ENCODE measurements at regions of chr5 and their contacts with region 1.

Region 1: GRCh38 chr5:149434162-149435014 is 55.3 kb upstream of the IL17B start:
- DNase-seq: peak in 1 of 2 donors; percentile 83
- ATAC-seq: no peak
- H3K4me3 ChIP-seq: no peak overlapping the region
- H3K27ac ChIP-seq: peak overlapping the region in 1 of 2 donors; percentile 2
- H3K4me1 ChIP-seq: no peaks in the 10 kb centered on the region
- H3K27me3 ChIP-seq: no peaks in the 10 kb centered on the region

Region 2: GRCh38 chr5:149367249-149367971 is 67.0 kb before region 1 on chr5:
- intact Hi-C with region 1: loop called in 1 of 2 experiments (anchors 5 kb)
- DNase-seq: peak; percentile 76 to 85
- ATAC-seq: peak; percentile 67
- H3K4me3 ChIP-seq: no peak overlapping the region
- H3K27ac ChIP-seq: peak overlapping the region in 1 of 2 donors; percentile 35
- H3K4me1 ChIP-seq: peaks cover 0 to 3% of the 10 kb centered on the region in 2 donors
- H3K27me3 ChIP-seq: no peaks in the 10 kb centered on the region

Region 3: GRCh38 chr5:149381987-149382340 is 52.4 kb before region 1 on chr5:
- intact Hi-C with region 1: loop called in 1 of 2 experiments (anchors 2 kb)
- DNase-seq: peak; percentile 90 to 95
- ATAC-seq: peak; percentile 84
- H3K4me3 ChIP-seq: no peak overlapping the region
- H3K27ac ChIP-seq: peak overlapping the region; percentile 99 to 100
- H3K4me1 ChIP-seq: peaks cover 0 to 1% of the 10 kb centered on the region in 2 donors
- H3K27me3 ChIP-seq: no peaks in the 10 kb centered on the region

Measured in aorta (tissue), 5 donors.